ENCODE measurements at regions of chr20 and their contacts with region 1.

Region 1: GRCh38 chr20:54103067-54103761 is 32.8 kb upstream of the BCAS1 start:
- DNase-seq: no peak
- H3K4me3 ChIP-seq: no peak overlapping the region
- CTCF ChIP-seq: peak; percentile 87

Region 2: DNA sequence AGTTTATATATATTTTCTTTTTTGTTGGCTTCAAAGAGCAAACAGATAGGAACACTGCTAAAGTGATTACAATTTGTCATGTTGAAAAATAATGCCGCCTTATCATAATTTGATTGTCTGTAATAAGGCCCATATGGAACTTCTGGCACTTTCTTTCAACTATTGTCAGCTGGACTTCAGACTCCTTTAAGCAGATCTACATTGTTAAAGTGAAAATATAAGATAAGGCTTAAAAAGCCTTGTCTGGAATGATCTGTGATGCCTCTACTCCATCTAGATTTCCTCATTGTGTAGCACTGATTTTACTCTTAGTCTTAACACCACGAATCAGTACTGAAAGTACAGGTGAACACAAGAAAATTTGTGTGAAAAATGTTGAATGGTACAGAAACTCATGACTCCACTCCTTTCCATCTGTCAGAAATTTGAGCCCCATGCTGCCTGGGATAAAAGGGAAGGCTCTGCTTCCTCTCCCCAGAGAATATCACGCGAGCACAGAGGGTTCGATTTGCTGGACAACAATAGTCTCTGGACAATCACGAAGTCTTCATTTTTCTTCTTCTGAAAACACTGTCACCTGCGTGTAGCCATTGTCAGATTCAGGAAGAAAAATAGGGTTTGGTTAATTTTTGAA is 88.8 kb before region 1 on chr20:
- CTCF ChIA-PET with region 1: no interaction called
- POLR2A ChIA-PET with region 1: no interaction called
- DNase-seq: no peak
- H3K4me3 ChIP-seq: no peak overlapping the region
- CTCF ChIP-seq: no peak

Region 3: GRCh38 chr20:54115151-54115854 is 12.1 kb after region 1 on chr20:
- CTCF ChIA-PET with region 1: interaction called, 76 read pairs
- POLR2A ChIA-PET with region 1: no interaction called
- DNase-seq: no peak
- H3K4me3 ChIP-seq: no peak overlapping the region
- CTCF ChIP-seq: no peak

Region 4: GRCh38 chr20:54132612-54133433 is 29.6 kb after region 1 on chr20:
- CTCF ChIA-PET with region 1: interaction called, 36 read pairs
- POLR2A ChIA-PET with region 1: interaction called, 3 read pairs
- DNase-seq: peak; percentile 95
- H3K4me3 ChIP-seq: peak overlapping the region; percentile 35
- CTCF ChIP-seq: no peak

Region 5: GRCh38 chr20:54179946-54180345 is 76.7 kb after region 1 on chr20:
- CTCF ChIA-PET with region 1: interaction called, 20 read pairs
- POLR2A ChIA-PET with region 1: no interaction called
- DNase-seq: no peak
- H3K4me3 ChIP-seq: no peak overlapping the region
- CTCF ChIP-seq: no peak

Region 6: DNA sequence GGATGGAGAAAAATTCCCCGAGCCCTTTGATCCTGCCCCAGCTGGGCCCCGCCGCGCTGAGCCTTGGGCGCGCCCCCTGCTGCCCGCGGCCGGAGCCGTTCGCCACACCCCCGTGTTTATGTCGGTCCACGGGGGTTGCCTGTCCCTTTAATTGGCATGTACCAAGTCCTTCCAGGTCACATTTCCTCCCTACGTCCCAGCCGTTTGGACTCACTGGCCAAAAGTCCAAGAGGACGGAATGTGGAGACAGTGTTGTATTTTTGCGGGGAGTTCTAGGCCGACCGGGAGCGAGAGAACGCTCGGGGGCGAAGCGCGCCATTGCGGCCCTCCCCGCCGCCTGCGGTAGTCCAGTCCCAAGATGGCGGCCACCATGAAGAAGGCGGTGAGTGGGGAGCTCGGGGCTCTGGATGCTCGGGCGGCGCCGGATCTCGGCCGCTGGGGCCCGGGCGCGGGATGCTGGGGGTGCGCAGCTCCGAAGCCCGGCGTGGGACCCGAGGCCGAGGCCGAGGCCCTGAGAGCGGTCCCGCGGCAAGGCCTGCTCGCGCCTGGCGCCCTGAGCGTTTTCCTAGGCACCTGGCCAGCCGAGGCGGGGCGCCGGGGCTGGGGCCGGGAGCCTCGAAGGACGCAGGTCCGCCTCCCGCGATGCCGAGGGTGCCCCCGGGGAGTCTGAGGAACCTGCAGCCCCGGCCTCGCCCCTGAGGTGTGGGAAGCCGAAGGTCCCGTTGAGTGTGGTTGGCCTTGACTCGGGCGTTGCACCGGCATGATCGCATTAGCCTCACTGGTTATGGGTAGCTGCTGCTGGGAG is 104.7 kb after region 1 on chr20 and contains the start of gene PFDN4:
- CTCF ChIA-PET with region 1: interaction called, 1,179 read pairs
- POLR2A ChIA-PET with region 1: no interaction called
- DNase-seq: peak; percentile 10
- H3K4me3 ChIP-seq: peak within 1 kb of the TSS; percentile 98
- CTCF ChIP-seq: peak; percentile 89